Caco-2 (cell line): ENCODE measurements at regions of chr19 and their contacts with region 1.

Region 1: GRCh38 chr19:51159656-51160055 is 17.6 kb downstream of the SIGLEC7 start:
- DNase-seq: no peak
- H3K4me3 ChIP-seq: no peak overlapping the region
- H3K4me3 Mint-ChIP-seq: no peak overlapping the region
- H3K27ac Mint-ChIP-seq: no peak overlapping the region
- H3K4me1 ChIP-seq: peaks cover 20% of the 10 kb centered on the region
- H3K4me1 Mint-ChIP-seq: peaks cover 14% of the 10 kb centered on the region
- H3K27me3 ChIP-seq: no peaks in the 10 kb centered on the region
- H3K27me3 Mint-ChIP-seq: peaks cover 24% of the 10 kb centered on the region
- CTCF ChIP-seq: no peak

Region 2: DNA sequence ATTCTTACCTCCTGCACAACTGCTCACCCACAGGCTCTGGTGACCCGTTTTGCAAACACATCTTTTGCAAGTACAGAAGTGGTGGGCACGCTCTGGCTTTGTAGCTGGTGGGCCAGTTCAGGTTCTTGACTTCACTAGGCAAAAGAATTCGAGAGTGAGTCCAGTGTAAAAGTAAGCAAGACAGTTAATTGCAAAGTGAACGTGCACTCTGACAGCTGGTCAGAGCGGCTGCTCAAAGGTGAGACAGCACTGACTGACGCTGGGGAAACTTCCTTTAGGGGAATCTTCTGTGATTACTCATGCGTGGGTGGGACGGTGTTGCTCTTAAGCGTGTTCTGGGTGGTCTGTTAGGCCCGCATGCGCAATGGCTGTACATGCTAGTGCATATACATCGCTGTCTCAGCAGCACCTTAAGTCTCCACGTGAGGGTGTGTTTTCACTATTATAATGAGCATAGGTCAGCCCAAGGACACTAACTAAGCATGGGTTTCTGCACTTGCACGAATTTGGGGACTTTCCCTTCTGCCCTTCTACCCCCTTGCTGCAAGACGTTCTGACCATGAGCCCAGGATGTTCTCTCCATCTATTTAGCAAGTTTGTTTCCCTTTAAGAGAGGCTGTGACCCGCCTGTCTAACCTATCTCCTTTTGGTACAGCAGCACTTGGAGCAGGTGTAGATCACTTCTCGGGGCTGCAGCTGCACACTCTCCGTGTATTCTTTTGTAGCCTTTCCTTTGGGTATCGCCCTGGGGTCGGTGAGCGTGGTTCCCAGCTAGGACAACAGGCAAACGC is 35.1 kb after region 1 on chr19:
- CTCF ChIA-PET with region 1: no interaction called
- POLR2A ChIA-PET with region 1: no interaction called
- intact Hi-C with region 1: no loop called
- DNase-seq: no peak
- H3K4me3 ChIP-seq: no peak overlapping the region
- H3K4me3 Mint-ChIP-seq: no peak overlapping the region
- H3K27ac Mint-ChIP-seq: no peak overlapping the region
- H3K4me1 ChIP-seq: no peaks in the 10 kb centered on the region
- H3K4me1 Mint-ChIP-seq: peaks cover 7% of the 10 kb centered on the region
- H3K27me3 ChIP-seq: no peaks in the 10 kb centered on the region
- H3K27me3 Mint-ChIP-seq: peaks cover 13% of the 10 kb centered on the region
- CTCF ChIP-seq: no peak

Region 3: GRCh38 chr19:51259348-51260245 is 99.9 kb after region 1 on chr19:
- CTCF ChIA-PET with region 1: interaction called, 4 read pairs
- POLR2A ChIA-PET with region 1: interaction called, 5 read pairs
- intact Hi-C with region 1: loop called (anchors 1 kb)
- DNase-seq: peak in 1 of 2 experiments; percentile 57
- H3K4me3 ChIP-seq: no peak overlapping the region
- H3K4me3 Mint-ChIP-seq: no peak overlapping the region
- H3K27ac Mint-ChIP-seq: no peak overlapping the region
- H3K4me1 ChIP-seq: no peaks in the 10 kb centered on the region
- H3K4me1 Mint-ChIP-seq: no peaks in the 10 kb centered on the region
- H3K27me3 ChIP-seq: no peaks in the 10 kb centered on the region
- H3K27me3 Mint-ChIP-seq: peaks cover 4% of the 10 kb centered on the region
- CTCF ChIP-seq: peak; percentile 67 to 83

Region 4: GRCh38 chr19:51621178-51621577 is 461.5 kb after region 1 on chr19:
- CTCF ChIA-PET with region 1: no interaction called
- POLR2A ChIA-PET with region 1: no interaction called
- intact Hi-C with region 1: no loop called
- DNase-seq: no peak
- H3K4me3 ChIP-seq: no peak overlapping the region
- H3K4me3 Mint-ChIP-seq: no peak overlapping the region
- H3K27ac Mint-ChIP-seq: no peak overlapping the region
- H3K4me1 ChIP-seq: no peaks in the 10 kb centered on the region
- H3K4me1 Mint-ChIP-seq: no peaks in the 10 kb centered on the region
- H3K27me3 ChIP-seq: no peaks in the 10 kb centered on the region
- H3K27me3 Mint-ChIP-seq: peaks cover 11% of the 10 kb centered on the region
- CTCF ChIP-seq: no peak